ENCODE measurements at regions of chr11 and their contacts with region 1.

Region 1: DNA sequence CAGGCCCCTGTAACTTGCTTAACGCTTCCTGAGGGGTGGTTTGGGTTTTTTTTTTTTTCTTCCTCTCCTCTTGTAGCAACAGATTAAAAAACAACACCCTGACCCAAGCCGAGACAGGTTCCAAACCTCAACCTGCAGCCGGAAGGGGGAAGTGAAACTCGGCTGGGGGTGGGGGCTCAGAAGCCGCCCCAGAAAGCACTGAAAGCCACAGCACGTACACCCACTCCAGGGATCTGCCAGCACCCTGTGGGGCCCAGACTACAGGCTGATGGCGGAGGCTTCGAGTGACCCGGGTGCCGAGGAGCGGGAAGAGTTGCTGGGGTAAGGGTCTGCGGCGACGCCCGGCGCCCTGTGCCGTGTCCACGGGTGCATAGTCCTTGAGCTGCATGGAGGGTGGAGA is at the start of gene LSP1:
- DNase-seq: peak; percentile 84
- H3K4me3 Mint-ChIP-seq: peak within 1 kb of the TSS; percentile 98
- H3K27ac Mint-ChIP-seq: peak within 1 kb of the TSS; percentile 99
- H3K4me1 Mint-ChIP-seq: peaks cover 53% of the 10 kb centered on the region
- H3K27me3 Mint-ChIP-seq: no peaks in the 10 kb centered on the region
- total RNA-seq, gene LSP1: 257 and 262 TPM in 2 replicates

Region 2: DNA sequence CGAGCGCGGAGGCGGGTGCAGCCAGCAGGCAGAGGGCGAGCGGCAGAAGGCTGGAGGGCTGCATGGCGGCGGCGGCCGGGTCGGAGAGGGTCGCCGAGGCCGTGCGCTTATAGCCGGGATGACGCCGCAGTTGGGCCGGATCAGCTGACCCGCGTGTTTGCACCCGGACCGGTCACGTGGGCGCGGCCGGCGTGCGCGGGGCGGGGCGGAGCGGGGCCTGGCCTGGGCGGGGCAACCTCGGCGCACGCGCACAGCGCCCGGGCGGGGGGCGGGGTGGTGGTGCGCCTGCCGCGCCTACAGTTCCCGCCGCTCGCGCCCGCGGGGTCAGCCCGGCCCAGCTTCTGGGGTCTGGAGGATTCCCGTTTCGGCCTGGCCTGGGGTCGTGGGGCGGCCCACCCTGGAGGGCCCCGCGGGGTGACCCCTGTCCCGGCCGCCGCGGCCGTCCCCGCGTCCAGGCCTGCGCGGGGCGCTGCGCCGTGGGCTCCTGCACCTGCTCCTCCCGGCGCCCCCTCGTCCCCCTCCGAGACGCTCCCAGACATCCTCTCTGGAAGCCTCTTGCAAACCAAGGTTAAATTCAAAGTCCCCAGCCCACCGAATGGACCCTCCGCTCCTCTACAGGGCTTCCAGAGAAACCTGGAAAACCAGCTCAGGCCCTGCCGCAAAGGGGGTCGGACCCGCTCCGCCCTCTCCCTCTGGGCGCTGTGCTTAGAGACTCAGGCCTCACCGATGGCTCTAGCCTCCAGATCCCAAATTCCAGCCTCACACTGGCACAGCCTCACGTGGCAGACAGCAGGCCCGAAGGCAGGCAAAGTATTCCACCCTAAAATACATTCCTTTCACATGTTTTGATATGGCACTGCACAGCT is 88.8 kb before region 1 on chr11 and contains the start of gene CTSD:
- intact Hi-C with region 1: loop called (anchors 2 kb)
- DNase-seq: peak; percentile 88
- H3K4me3 Mint-ChIP-seq: peak within 1 kb of the TSS; percentile 89
- H3K27ac Mint-ChIP-seq: peak within 1 kb of the TSS; percentile 92
- H3K4me1 Mint-ChIP-seq: peaks cover 18% of the 10 kb centered on the region
- H3K27me3 Mint-ChIP-seq: no peaks in the 10 kb centered on the region
- total RNA-seq, gene CTSD: 84.2 and 92.1 TPM in 2 replicates

Region 3: DNA sequence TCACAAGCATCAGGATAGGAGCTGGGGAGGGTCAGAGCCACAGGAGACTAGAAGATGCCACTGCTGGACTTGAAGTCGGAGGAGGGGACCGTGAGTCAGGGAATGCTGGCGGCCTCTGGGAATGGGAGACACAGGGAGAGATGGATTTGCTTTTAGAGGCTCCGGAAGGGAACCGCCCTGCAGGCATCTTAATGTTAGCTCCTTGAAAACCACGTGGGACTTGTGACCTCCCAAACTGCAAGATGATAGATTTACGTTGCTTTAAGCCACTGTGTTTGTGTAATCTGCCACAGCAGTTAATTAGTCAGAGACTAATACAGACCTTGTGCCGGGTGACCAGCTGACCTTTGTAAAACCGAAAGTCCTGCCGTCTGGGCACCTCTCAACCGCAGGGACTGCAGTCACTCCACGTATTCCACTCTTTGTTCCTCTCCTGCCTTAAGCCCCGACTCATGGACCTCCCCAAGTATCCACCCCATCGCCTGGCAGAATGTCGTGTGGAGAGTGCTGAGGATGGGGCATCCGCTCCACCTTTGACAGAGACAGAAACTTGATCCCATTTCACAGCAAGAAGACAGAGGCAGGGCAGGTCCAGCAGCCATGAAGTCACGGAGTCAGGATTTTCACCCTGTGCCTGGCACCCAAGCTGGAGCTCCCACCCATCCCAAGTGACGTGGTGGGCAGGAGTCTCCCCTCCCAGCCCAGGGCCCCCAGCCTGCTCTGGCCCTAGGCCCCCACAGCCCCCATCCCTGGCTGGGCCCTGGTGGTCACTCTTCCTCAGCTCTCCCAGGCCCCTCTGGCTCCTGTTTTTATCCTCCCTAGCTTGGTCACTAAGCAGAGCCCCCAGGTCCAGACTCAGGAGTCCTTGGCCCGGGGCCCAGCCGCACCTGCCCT is 69.8 kb before region 1 on chr11:
- intact Hi-C with region 1: no loop called
- DNase-seq: no peak
- H3K4me3 Mint-ChIP-seq: no peak overlapping the region
- H3K27ac Mint-ChIP-seq: no peak overlapping the region
- H3K4me1 Mint-ChIP-seq: no peaks in the 10 kb centered on the region
- H3K27me3 Mint-ChIP-seq: peaks cover 3% of the 10 kb centered on the region

Region 4: DNA sequence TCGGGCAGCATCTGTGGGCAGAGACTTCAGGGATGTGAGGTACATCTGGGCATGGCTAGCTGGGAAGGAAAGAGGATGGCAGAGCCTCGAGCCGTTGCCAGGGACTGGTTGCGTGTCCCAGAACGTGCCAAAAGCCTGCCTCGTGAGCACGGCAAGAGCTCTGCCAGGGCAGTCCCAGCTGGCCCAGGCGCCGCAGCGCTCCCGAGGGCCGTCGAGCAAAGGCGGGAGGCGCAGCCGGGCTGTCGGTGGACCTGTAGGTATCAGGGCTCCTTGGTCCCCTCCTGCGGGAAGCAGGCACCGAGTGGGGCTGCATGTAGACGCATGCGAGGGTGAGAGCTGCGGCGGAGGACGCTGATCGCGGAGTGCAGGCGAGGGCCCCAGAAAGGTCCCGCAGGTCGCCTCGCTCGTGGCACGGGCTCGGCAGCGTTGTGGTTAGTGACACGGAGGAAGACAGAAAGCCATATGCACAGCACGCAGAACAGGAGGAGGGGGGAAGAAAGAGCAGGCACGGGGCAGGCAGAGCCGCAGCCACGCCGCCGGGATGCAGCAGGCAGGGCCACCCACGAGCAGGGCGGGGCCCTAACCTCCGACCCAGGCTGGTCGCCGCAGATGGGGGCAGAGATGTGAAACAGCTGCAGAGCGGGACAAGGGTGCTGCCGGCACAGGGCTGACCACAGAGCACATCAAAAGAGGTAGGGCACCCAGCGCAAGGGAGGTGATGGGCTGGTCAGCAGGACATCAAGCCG is 18.0 kb after region 1 on chr11:
- intact Hi-C with region 1: loop called (anchors 2 kb)
- DNase-seq: no peak
- H3K4me3 Mint-ChIP-seq: peak overlapping the region; percentile 22
- H3K27ac Mint-ChIP-seq: no peak overlapping the region
- H3K4me1 Mint-ChIP-seq: peaks cover 9% of the 10 kb centered on the region
- H3K27me3 Mint-ChIP-seq: peaks cover 2% of the 10 kb centered on the region

Region 5: DNA sequence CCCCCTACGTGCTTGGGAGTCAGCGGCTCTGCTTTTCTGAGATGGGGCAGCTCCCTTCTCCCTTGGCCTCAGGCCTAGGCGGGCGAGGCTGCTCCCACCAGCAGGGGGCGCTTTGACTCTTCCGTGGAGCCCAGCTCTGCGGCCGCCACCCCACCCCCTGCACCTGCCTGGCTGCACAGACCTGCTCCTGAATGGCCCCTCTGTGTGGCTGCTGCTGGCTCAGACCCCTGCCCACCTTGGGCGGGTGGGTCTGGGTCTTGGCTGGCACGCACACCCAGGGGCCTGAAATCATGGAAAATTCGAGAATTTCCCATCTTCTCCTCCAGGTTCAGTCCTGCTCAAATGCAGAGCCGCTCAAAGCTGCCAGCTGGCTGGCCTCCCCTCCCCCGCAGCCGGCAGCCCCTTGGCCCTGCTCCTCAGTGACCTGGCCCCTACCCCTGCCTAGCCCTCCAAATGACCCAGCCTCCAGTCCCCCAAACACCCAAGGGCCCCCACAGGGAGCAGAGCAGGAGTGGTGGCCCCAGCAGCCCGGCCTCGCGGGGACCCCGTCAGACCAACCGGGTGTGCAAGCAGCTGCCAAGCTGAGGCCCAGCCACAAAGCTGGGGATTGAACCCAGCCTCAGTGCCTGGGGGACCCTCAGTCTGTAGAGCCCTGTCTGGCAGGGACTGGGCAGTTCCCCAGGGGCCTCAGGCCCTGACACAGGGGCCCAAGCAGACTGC is 29.8 kb after region 1 on chr11:
- intact Hi-C with region 1: no loop called
- DNase-seq: peak; percentile 60
- H3K4me3 Mint-ChIP-seq: no peak overlapping the region
- H3K27ac Mint-ChIP-seq: no peak overlapping the region
- H3K4me1 Mint-ChIP-seq: no peaks in the 10 kb centered on the region
- H3K27me3 Mint-ChIP-seq: no peaks in the 10 kb centered on the region

Region 6: DNA sequence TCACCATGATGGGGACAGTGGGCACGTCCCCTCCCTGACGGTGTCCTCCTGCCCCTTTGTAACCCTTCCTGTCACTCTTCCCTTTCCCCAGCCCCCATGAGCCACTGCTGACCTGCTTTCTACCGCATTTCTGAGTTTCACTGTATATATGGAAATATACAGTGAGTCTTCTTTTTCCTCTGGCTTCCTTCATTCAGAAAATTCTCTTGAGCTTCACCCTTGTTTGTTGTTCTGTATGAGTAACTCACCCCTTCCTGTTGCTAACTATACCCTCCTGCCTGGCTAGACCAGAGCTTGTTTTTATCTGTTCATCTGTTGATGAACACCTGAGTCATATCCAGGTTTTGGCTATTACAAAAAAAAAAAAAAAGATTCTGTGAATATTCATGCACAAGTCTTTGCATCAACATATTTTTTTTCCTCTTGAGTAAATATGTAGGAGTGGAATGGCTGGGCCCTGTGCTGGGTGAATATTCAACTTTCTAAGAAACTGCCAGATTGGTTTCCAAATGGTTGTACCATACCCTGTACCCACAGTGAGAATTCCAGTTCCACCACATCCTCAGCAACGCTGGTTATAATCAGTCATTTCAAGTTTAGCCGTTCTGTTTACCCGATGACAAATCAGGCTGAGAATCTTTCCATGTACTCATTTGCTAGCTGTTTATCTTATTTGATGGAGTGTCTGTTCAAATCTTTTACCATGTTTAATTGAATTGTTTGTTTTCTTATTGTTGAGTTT is 224.4 kb after region 1 on chr11:
- intact Hi-C with region 1: loop called (anchors 1 kb)
- DNase-seq: peak; percentile 44
- H3K4me3 Mint-ChIP-seq: no peak overlapping the region
- H3K27ac Mint-ChIP-seq: peak overlapping the region; percentile 93
- H3K4me1 Mint-ChIP-seq: peaks cover 27% of the 10 kb centered on the region
- H3K27me3 Mint-ChIP-seq: peaks cover 4% of the 10 kb centered on the region

Region 7: GRCh38 chr11:2269601-2270321 is 416.9 kb after region 1 on chr11:
- intact Hi-C with region 1: loop called (anchors 5 kb)
- DNase-seq: peak; percentile 25
- H3K4me3 Mint-ChIP-seq: no peak overlapping the region
- H3K27ac Mint-ChIP-seq: no peak overlapping the region
- H3K4me1 Mint-ChIP-seq: peaks cover 16% of the 10 kb centered on the region
- H3K27me3 Mint-ChIP-seq: peaks cover 32% of the 10 kb centered on the region

Region 8: DNA sequence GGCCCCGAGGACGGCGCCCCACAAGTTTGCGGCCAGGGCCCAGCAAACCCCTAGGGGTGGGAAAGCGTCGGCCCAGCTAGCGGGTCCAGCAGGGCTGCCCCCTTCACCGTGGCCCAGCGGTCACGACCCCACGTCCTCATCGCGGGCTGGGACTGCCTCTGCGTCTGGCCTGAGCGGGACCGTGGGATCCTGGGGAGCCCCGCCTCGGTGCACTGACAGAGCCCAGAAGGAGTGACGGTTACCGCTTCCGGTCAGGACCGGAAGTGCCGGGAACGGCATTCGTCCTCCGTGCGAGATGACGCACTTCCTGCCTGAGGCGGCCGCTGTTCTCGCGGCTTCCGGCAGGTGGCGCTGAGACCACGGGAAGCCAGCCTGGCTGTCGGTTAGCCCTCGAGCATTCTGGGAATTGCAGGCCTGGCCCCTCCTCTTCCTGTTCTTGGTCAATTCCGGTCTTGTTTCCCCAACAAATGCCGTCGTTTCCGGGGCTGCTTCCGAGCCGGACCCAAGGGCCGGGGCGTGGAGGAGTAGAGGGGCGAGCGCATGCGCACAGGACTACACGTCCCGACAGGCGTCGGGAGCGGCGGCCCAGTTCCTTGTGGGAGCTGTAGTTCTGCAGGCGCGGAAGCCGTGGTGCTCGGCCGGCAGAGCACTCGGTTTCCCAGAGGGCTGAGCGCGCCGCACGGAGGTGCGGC is 547.3 kb after region 1 on chr11 and contains the start of gene TSSC4:
- intact Hi-C with region 1: loop called (anchors 5 kb)
- DNase-seq: peak; percentile 99
- H3K4me3 Mint-ChIP-seq: peak within 1 kb of the TSS; percentile 92
- H3K27ac Mint-ChIP-seq: peak within 1 kb of the TSS; percentile 84
- H3K4me1 Mint-ChIP-seq: no peaks in the 10 kb centered on the region
- H3K27me3 Mint-ChIP-seq: no peaks in the 10 kb centered on the region
- total RNA-seq, gene TSSC4: 70.8 and 76.4 TPM in 2 replicates